Activated naive CD4-positive, alpha-beta T cell treated with anti-CD3 and anti-CD28 coated beads for 36 hours (primary cell): ENCODE measurements at regions of chr7 and their contacts with region 1.

Region 1: DNA sequence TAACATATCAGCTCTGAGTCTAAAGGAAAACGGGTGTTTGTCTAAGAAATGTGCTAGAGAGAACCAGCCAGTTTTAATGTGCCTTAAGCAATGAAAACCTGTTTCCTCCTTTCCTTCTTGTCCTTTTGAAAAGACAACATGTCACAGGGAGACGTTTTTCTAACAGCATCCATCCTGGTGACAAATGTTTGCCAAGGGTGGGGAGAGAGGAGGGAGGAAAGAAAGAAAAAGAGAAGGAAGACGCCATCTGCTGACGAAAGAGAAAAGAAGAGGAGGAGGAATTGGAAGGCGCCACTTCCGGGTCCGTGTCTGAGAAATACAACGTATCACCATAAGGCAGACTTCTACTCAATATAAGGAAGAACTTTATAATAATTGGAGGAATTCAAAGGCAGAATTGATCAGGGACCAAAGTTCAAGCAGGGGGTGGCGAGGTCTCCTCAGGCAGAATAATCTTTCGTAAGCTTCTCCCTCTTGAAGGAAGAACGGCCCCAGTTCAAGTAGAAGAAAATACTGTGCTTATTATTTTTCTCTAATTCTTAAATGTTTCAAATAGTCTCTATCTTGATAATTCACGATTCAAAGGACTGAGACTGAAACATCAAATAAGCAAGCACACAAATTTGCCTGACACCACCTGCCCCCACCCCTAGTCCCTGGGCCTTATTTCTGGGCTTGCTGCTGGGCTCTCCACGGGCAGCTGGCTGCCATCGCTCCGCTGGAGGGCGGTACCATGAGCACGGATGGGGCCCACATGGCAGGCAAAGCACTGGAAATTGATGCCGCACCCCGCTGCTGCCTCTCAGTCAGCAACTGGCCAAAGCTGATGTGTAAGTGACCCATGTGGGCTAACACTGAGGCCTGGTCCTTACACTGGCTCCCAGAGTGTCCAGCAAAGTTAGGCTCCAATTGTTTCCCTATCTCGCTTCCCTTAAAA is 273.7 kb upstream of the KLF14 start:
- DNase-seq: peak; percentile 80
- H3K4me3 Mint-ChIP-seq: peak overlapping the region; percentile 52
- H3K27ac Mint-ChIP-seq: peak overlapping the region; percentile 91
- H3K4me1 Mint-ChIP-seq: peaks cover 86% of the 10 kb centered on the region
- H3K27me3 Mint-ChIP-seq: no peaks in the 10 kb centered on the region

Region 2: DNA sequence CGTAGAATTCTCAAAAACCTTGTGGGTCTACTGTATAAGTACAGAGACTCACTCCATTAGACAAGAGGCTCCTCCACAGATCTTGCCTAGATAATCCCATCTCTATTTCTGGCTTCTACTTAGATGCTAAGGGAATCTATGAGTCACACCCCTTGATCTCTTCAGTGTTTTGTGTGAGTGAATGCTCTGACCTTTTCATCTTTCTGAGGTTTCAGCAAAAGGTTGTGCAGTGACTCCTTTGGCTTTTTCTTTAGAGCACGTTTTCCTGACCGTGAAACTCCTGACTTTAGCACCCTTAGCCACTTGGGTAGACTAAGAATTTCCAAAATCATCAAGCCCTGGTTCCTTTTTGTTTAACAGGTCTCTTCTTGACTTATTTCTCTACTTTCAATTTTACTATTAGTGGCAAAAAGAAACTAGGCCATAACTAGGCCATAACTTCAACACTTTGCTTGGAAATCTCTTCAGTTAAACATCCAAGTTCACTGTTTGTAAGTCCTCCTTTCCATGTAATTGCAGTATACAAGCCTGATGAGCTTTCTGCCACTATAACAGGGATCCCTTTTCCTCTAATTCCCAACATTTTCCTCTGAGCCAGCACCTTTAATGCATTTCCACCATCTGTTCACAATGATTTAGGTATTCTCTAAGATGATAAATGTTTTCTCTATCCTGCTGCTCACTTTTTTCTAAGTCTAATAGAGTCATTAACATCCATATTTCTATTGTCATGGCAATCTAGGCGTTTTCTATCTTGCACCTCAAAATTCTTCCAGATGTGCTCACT is 358.5 kb before region 1 on chr7:
- CTCF ChIA-PET with region 1: no interaction called
- intact Hi-C with region 1: loop called (anchors 10 kb)
- DNase-seq: peak; percentile 53
- H3K4me3 Mint-ChIP-seq: no peak overlapping the region
- H3K27ac Mint-ChIP-seq: peak overlapping the region; percentile 79
- H3K4me1 Mint-ChIP-seq: peaks cover 29% of the 10 kb centered on the region
- H3K27me3 Mint-ChIP-seq: no peaks in the 10 kb centered on the region

Region 3: GRCh38 chr7:130896898-130897514 is 110.7 kb before region 1 on chr7:
- CTCF ChIA-PET with region 1: interaction called, 10 read pairs
- intact Hi-C with region 1: loop called (anchors 1 kb)
- DNase-seq: peak; percentile 85
- H3K4me3 Mint-ChIP-seq: no peak overlapping the region
- H3K27ac Mint-ChIP-seq: peak overlapping the region; percentile 85
- H3K4me1 Mint-ChIP-seq: peaks cover 88% of the 10 kb centered on the region
- H3K27me3 Mint-ChIP-seq: no peaks in the 10 kb centered on the region

Region 4: DNA sequence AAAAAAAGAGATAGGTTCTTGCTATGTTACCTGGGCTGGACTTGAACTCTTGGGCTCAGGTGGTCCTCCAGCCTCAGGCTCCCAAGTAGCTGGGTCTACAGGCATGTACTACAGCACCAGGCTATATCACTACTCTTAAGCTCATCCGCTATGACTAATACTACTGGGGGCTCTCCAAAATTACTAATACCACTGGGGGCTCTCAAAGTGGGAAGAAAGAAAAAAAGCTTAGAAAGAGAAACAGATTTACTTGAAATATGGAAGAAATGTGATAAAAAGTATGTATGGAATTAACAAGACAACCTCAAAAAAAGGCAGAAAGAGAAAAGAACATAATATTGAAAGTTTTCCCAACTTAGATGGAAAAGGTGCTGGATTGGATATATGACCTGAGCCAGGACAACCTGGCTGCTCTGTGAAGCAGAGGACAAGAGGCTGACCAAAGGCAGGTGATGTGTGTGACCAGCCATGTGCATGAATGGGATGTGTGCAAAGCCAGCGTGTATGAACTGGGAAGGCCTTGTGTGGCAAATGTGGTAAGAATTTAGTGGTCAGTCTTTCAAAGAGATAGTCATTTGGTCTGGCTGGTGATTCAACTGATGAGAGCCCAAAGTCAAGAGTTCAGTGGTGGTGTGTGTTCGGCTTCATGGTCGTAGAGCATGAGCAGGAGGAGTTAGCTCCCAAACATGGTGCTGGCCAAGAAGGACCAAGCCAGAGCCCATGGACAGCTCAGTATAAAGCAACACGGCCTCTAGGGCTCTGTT is 41.2 kb before region 1 on chr7:
- CTCF ChIA-PET with region 1: interaction called, 12 read pairs
- intact Hi-C with region 1: loop called (anchors 1 kb)
- DNase-seq: no peak
- H3K4me3 Mint-ChIP-seq: peak overlapping the region; percentile 1
- H3K27ac Mint-ChIP-seq: peak overlapping the region; percentile 90
- H3K4me1 Mint-ChIP-seq: peaks cover 77% of the 10 kb centered on the region
- H3K27me3 Mint-ChIP-seq: no peaks in the 10 kb centered on the region

Region 5: DNA sequence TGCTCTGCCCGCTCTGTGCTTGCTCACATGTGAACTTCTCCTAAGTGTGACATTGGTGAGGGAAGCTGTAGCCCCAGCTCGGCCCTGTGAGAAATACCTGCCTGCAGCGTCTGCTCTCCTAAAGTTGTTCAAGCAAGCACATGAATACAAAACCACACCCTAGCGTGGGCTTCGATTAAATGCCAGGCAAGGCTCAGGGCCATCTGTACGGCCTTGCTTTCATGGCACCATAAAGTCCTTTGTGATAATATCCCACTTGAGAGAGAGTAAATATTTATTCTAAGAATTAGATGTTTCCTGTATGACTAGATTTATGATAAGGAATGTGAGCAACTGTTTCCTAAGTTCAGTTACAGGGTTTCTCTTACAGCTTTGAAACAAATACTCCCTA is 10.8 kb before region 1 on chr7:
- CTCF ChIA-PET with region 1: interaction called, 5 read pairs
- intact Hi-C with region 1: loop called (anchors 1 kb)
- DNase-seq: peak; percentile 58
- H3K4me3 Mint-ChIP-seq: peak overlapping the region; percentile 59
- H3K27ac Mint-ChIP-seq: peak overlapping the region; percentile 90
- H3K4me1 Mint-ChIP-seq: peaks cover 79% of the 10 kb centered on the region
- H3K27me3 Mint-ChIP-seq: no peaks in the 10 kb centered on the region

Region 6: GRCh38 chr7:131027287-131027773 is 19.7 kb after region 1 on chr7:
- CTCF ChIA-PET with region 1: interaction called, 9 read pairs
- intact Hi-C with region 1: loop called (anchors 1 kb)
- DNase-seq: peak; percentile 52
- H3K4me3 Mint-ChIP-seq: no peak overlapping the region
- H3K27ac Mint-ChIP-seq: peak overlapping the region; percentile 74
- H3K4me1 Mint-ChIP-seq: peaks cover 86% of the 10 kb centered on the region
- H3K27me3 Mint-ChIP-seq: no peaks in the 10 kb centered on the region

Region 7: GRCh38 chr7:131188367-131189339 is 181.0 kb after region 1 on chr7:
- CTCF ChIA-PET with region 1: no interaction called
- intact Hi-C with region 1: loop called (anchors 1 kb)
- DNase-seq: peak; percentile 70
- H3K4me3 Mint-ChIP-seq: no peak overlapping the region
- H3K27ac Mint-ChIP-seq: peak overlapping the region; percentile 89
- H3K4me1 Mint-ChIP-seq: peaks cover 51% of the 10 kb centered on the region
- H3K27me3 Mint-ChIP-seq: no peaks in the 10 kb centered on the region

Region 8: GRCh38 chr7:131370523-131370968 is 362.9 kb after region 1 on chr7:
- CTCF ChIA-PET with region 1: no interaction called
- intact Hi-C with region 1: no loop called
- DNase-seq: peak; percentile 15
- H3K4me3 Mint-ChIP-seq: no peak overlapping the region
- H3K27ac Mint-ChIP-seq: no peak overlapping the region
- H3K4me1 Mint-ChIP-seq: peaks cover 66% of the 10 kb centered on the region
- H3K27me3 Mint-ChIP-seq: no peaks in the 10 kb centered on the region